HEK293 (cell line): ENCODE measurements at regions of chr12 and their contacts with region 1.

Region 1: DNA sequence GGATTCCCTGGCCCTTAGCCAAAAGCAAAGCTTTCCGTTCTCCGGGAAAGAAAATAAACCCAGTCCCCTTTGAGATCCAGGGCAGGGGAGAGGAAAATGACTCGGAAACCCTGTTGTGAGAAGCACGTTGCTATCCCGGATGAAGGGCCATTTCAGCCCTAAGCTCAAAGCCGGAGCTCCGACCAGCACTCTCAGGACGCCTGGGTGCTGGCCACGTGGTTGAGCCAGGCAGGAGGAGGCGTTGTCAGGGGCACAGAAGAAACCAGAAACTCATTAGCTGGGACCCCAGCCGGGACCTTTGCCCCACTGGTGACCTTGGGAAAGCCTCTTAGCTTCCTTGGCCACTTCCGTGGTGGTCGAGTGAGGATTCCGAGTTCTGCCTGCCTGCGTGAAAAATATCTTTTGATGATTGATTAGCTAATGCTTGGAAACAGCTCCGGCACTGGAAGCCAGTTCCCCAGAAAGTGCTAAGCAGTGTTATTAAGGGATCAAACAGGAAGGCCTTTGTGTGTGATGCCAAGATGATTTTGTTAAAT is 57.6 kb upstream of the FZD10 start:
- H3K4me3 ChIP-seq: no peak overlapping the region
- H3K27ac ChIP-seq: no peak overlapping the region
- H3K4me1 ChIP-seq: no peaks in the 10 kb centered on the region
- CTCF ChIP-seq: no peak

Region 2: DNA sequence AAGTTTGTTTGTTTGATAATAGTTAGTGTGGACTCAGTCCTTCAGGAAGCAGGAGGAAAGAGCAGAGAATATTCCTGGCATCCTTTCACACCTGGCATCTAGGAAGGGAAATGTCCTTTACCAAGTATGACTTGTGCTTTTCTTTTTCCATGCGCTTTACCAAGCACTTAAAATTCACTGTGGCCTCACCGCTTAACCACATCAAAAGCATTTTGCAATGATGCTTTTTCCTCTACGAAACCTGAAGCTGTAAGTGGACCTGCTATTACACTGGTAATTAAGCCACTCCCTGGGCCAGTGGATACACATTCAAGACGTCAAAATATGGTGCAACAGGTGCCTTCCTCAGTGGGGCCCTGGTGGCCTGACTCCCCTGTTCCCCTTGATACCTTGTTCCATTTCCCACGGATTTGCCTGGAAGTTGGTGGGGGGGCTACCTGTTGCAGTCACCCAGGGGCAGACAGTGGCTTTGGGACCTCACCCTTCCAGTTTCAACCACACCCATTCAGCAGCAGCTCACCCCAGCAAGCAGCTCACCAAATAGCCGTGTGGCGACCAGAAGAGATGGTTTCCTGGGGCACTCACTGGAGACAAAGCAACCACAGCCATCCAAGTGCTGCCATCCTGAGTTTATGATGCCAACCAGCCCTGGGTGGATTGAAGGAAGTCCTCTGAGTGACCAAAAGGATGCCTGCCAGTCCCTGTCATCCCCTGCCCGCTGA is 43.4 kb after region 1 on chr12:
- CTCF ChIA-PET with region 1: no interaction called
- POLR2A ChIA-PET with region 1: no interaction called
- H3K4me3 ChIP-seq: no peak overlapping the region
- H3K27ac ChIP-seq: no peak overlapping the region
- H3K4me1 ChIP-seq: no peaks in the 10 kb centered on the region
- CTCF ChIP-seq: no peak

Region 3: DNA sequence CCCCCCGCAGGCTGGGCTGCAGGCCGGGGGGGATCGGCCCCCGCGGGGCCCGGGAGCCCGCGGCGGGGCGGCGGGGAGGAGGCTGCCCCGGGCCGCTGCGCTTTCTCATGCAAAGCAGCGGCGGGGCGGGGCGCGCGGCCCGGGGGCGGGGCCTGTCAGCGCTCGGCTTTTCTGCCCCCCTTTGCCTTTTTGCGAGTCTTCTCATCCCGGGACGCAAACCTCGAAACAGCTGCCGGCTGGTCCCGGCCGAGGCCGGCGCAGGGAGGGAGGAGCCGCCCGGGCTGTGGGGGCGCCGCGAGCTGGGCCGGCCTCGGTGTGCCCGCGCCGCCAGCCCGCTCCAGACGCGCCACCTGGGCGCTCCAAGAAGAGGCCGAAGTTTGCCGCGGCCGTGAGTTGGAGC is 57.6 kb after region 1 on chr12 and contains the start of gene FZD10:
- CTCF ChIA-PET with region 1: no interaction called
- POLR2A ChIA-PET with region 1: interaction called, 13 read pairs
- H3K4me3 ChIP-seq: peak within 1 kb of the TSS; percentile 29
- H3K27ac ChIP-seq: peak within 1 kb of the TSS; percentile 79
- H3K4me1 ChIP-seq: no peaks in the 10 kb centered on the region; the same call in 1 of the 2 replicates
- CTCF ChIP-seq: no peak

Region 4: DNA sequence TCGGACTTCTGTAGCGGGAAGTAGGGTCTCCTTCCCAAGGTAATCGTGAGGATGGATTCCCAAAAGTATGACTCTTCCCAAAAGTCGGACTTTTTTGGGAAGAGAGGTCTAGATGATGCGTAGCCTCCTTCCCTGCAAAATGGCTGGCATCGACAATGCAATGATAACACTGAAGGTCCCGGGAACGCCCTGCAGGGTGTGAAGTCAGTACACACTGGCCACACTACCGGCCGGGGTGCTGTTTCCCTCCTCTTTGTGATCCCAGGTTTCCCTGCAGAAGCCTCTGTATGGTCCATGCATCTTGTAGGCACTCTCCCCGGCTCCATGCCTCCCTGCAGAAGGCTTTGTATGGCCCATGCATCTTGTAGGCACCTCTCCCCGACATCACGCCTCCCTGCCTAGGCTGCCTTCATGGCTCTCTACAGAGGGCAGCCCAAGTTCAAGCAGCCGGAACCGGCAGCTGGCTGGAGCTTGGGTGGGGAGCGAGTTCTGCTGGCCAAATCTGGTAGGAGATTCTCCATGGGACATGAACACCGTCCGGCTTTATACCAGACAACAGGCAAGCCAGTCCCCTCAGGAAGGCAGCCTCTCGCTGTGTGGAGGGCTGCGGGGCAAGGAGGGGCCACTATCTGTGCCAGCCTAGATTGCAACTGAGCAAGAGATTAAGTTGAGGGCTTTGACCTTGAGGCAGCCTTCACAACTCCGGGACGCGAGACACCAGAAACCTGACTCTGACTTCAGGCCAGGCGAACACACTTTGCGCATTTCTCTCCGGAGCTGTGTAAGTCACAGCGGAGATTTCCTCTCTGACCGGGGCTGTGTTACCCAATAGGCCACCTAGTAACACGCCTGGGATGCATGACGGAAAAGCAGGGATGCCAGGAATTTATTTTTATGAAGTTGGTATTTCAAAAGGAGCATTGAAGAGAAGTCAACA is 81.1 kb after region 1 on chr12:
- CTCF ChIA-PET with region 1: no interaction called
- POLR2A ChIA-PET with region 1: no interaction called
- H3K4me3 ChIP-seq: no peak overlapping the region
- H3K27ac ChIP-seq: no peak overlapping the region
- H3K4me1 ChIP-seq: no peaks in the 10 kb centered on the region
- CTCF ChIP-seq: no peak

Region 5: GRCh38 chr12:130576371-130576816 is 471.8 kb after region 1 on chr12:
- CTCF ChIA-PET with region 1: no interaction called
- POLR2A ChIA-PET with region 1: no interaction called
- H3K4me3 ChIP-seq: no peak overlapping the region
- H3K27ac ChIP-seq: no peak overlapping the region
- H3K4me1 ChIP-seq: no peaks in the 10 kb centered on the region
- CTCF ChIP-seq: no peak